Endothelial cell of umbilical vein (primary cell): ENCODE measurements at regions of chr5 and their contacts with region 1.

Region 1: GRCh38 chr5:96934708-96935558 is 947 bp upstream of the LNPEP start:
- DNase-seq: peak; percentile 94
- H3K4me3 ChIP-seq: peak overlapping the region; percentile 30 to 97 (median 85)
- H3K27ac ChIP-seq: peak overlapping the region; percentile 82
- H3K4me1 ChIP-seq: peaks cover 21% of the 10 kb centered on the region
- H3K27me3 ChIP-seq: no peaks in the 10 kb centered on the region
- CTCF ChIP-seq: no peak
- POLR2A ChIP-seq: peak; percentile 95

Region 2: GRCh38 chr5:96823900-96824351 is 111.0 kb before region 1 on chr5:
- CTCF ChIA-PET with region 1: no interaction called
- POLR2A ChIA-PET with region 1: no interaction called
- dilution Hi-C with region 1: no loop called
- intact Hi-C with region 1: loop called (anchors 5 kb)
- DNase-seq: peak; percentile 60
- H3K4me3 ChIP-seq: no peak overlapping the region
- H3K27ac ChIP-seq: peak overlapping the region; percentile 19
- H3K4me1 ChIP-seq: peaks cover 20% of the 10 kb centered on the region
- H3K27me3 ChIP-seq: no peaks in the 10 kb centered on the region
- CTCF ChIP-seq: no peak
- POLR2A ChIP-seq: no peak

Region 3: DNA sequence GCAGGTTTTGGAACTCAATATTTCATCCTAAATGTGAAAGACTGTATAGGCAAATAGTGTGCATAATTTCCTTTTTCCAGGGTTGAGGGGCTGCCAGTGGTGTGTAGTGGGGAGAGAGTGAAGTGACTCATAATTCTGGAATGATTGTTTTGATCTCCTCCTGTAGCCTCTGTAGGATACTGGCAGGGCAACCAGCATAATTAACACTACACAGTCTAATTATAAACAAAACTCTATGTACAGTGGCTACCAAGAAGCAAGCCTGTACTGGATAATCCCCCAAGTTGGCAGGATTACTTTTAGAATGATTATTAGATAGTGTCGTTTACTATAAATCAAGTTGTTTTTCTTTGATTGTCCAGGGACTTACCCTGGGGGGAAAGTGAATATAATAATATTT is 33.1 kb after region 1 on chr5:
- CTCF ChIA-PET with region 1: interaction called, 3 read pairs
- POLR2A ChIA-PET with region 1: no interaction called
- dilution Hi-C with region 1: no loop called
- intact Hi-C with region 1: loop called (anchors 1 kb)
- DNase-seq: peak; percentile 89
- H3K4me3 ChIP-seq: no peak overlapping the region
- H3K27ac ChIP-seq: peak overlapping the region; percentile 66
- H3K4me1 ChIP-seq: peaks cover 25% of the 10 kb centered on the region
- H3K27me3 ChIP-seq: no peaks in the 10 kb centered on the region
- CTCF ChIP-seq: no peak
- POLR2A ChIP-seq: no peak

Region 4: GRCh38 chr5:97142521-97143254 is 207.8 kb after region 1 on chr5 and contains the start of gene LIX1:
- CTCF ChIA-PET with region 1: interaction called, 4 read pairs
- POLR2A ChIA-PET with region 1: no interaction called
- dilution Hi-C with region 1: no loop called
- intact Hi-C with region 1: loop called (anchors 1 kb)
- DNase-seq: peak; percentile 50
- H3K4me3 ChIP-seq: no peak within 1 kb of the TSS
- H3K27ac ChIP-seq: no peak within 1 kb of the TSS
- H3K4me1 ChIP-seq: no peaks in the 10 kb centered on the region
- H3K27me3 ChIP-seq: peaks cover 5 to 13% of the 10 kb centered on the region in 2 experiments
- CTCF ChIP-seq: peak; percentile 52 to 53
- POLR2A ChIP-seq: no peak
- total RNA-seq, gene LIX1: not detected in 2 replicates